Activated CD8-positive, alpha-beta T cell treated with anti-CD3 and anti-CD28 coated beads for 36 hours (primary cell): ENCODE measurements at regions of chr1 and their contacts with region 1.

Region 1: GRCh38 chr1:150925816-150926741 is at the start of gene SETDB1:
- DNase-seq: peak; percentile 98
- ATAC-seq: peak; percentile 91
- H3K4me3 Mint-ChIP-seq: peak within 1 kb of the TSS; percentile 92
- H3K27ac Mint-ChIP-seq: peak within 1 kb of the TSS; percentile 98
- H3K4me1 Mint-ChIP-seq: peaks cover 29% of the 10 kb centered on the region
- H3K27me3 Mint-ChIP-seq: no peaks in the 10 kb centered on the region
- CTCF ChIP-seq: no peak
- total RNA-seq, gene SETDB1: 45.1 to 52.3 TPM

Region 2: DNA sequence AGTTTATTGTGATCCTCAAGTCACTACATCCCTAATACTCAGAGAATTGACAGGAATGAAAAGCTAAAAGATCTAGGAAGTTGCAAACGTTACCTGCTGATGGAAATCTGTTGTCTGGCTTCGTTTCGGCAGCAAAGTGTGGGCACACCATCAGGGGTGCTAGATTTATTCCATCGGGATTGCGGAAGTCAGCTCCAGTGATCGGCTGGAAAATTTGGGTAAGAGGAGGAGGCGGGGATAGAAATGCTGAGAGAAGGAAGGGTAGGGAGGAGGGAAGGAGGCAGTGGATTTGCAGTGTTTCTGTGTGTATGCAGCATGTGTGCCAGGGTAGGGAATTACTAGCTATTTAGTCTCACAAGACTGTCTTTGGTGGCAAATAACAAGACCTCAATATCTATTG is 118.0 kb before region 1 on chr1 and contains the start of gene CTSK:
- CTCF ChIA-PET with region 1: interaction called, 13 read pairs
- POLR2A ChIA-PET with region 1: interaction called, 4 read pairs
- intact Hi-C with region 1: no loop called
- DNase-seq: no peak
- ATAC-seq: no peak
- H3K4me3 Mint-ChIP-seq: no peak within 1 kb of the TSS
- H3K27ac Mint-ChIP-seq: no peak within 1 kb of the TSS
- H3K4me1 Mint-ChIP-seq: peaks cover 14% of the 10 kb centered on the region
- H3K27me3 Mint-ChIP-seq: no peaks in the 10 kb centered on the region
- CTCF ChIP-seq: no peak
- total RNA-seq, gene CTSK: 2.9 to 3.6 TPM

Region 3: GRCh38 chr1:150841626-150842025 is 84.5 kb before region 1 on chr1:
- CTCF ChIA-PET with region 1: interaction called, 9 read pairs
- POLR2A ChIA-PET with region 1: interaction called, 4 read pairs
- intact Hi-C with region 1: loop called (anchors 5 kb)
- DNase-seq: peak; percentile 10
- ATAC-seq: peak; percentile 83
- H3K4me3 Mint-ChIP-seq: no peak overlapping the region
- H3K27ac Mint-ChIP-seq: peak overlapping the region; percentile 81
- H3K4me1 Mint-ChIP-seq: peaks cover 37% of the 10 kb centered on the region
- H3K27me3 Mint-ChIP-seq: no peaks in the 10 kb centered on the region
- CTCF ChIP-seq: no peak

Region 4: DNA sequence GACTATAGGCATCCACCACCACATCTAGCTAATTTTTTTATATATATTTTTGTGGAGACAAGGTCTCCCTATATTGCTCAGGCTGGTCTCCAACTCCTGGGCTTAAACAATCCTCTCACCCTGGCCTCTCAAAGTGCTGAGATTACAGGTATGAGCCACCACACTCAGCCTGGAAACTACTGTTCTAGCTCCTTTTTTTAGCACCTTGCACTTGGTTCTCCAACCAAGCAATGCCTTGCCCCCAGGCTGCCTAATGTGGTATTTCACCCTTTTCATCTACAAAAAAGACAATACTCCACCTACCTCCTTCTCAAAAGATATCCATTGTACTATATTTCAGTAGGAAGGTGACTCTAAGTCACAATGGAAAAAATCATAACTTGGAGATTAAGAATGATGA is 56.4 kb before region 1 on chr1:
- CTCF ChIA-PET with region 1: interaction called, 16 read pairs
- POLR2A ChIA-PET with region 1: no interaction called
- intact Hi-C with region 1: no loop called
- DNase-seq: peak; percentile 49
- ATAC-seq: peak; percentile 83
- H3K4me3 Mint-ChIP-seq: no peak overlapping the region
- H3K27ac Mint-ChIP-seq: peak overlapping the region; percentile 38
- H3K4me1 Mint-ChIP-seq: peaks cover 40% of the 10 kb centered on the region
- H3K27me3 Mint-ChIP-seq: no peaks in the 10 kb centered on the region
- CTCF ChIP-seq: no peak

Region 5: DNA sequence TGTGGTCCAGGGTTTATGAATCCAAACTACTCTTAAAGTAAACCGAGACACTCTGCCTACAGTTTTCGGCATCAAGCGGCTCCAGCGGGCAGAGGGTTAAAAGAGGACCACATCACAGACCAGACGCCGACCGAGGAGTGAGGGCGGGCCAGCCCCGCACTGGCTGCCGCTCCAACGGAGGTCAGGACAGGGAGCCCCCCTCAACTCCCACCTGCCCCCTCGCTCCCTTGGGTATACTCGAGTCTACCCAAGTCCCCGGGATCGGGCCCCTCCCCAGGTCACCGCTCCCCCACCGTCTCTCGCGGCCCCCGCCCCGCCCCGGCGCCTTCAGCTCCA is 50.0 kb before region 1 on chr1:
- CTCF ChIA-PET with region 1: interaction called, 11 read pairs
- POLR2A ChIA-PET with region 1: interaction called, 4 read pairs
- intact Hi-C with region 1: loop called (anchors 5 kb)
- DNase-seq: peak; percentile 72
- ATAC-seq: peak; percentile 40
- H3K4me3 Mint-ChIP-seq: peak overlapping the region; percentile 87
- H3K27ac Mint-ChIP-seq: peak overlapping the region; percentile 92
- H3K4me1 Mint-ChIP-seq: peaks cover 23% of the 10 kb centered on the region
- H3K27me3 Mint-ChIP-seq: no peaks in the 10 kb centered on the region
- CTCF ChIP-seq: peak; percentile 16

Region 6: GRCh38 chr1:150890033-150890416 is 36.1 kb before region 1 on chr1:
- CTCF ChIA-PET with region 1: interaction called, 10 read pairs
- POLR2A ChIA-PET with region 1: interaction called, 3 read pairs
- intact Hi-C with region 1: loop called (anchors 1 kb)
- DNase-seq: no peak
- ATAC-seq: peak; percentile 89
- H3K4me3 Mint-ChIP-seq: peak overlapping the region; percentile 41
- H3K27ac Mint-ChIP-seq: peak overlapping the region; percentile 80
- H3K4me1 Mint-ChIP-seq: peaks cover 31% of the 10 kb centered on the region
- H3K27me3 Mint-ChIP-seq: no peaks in the 10 kb centered on the region
- CTCF ChIP-seq: no peak

Region 7: DNA sequence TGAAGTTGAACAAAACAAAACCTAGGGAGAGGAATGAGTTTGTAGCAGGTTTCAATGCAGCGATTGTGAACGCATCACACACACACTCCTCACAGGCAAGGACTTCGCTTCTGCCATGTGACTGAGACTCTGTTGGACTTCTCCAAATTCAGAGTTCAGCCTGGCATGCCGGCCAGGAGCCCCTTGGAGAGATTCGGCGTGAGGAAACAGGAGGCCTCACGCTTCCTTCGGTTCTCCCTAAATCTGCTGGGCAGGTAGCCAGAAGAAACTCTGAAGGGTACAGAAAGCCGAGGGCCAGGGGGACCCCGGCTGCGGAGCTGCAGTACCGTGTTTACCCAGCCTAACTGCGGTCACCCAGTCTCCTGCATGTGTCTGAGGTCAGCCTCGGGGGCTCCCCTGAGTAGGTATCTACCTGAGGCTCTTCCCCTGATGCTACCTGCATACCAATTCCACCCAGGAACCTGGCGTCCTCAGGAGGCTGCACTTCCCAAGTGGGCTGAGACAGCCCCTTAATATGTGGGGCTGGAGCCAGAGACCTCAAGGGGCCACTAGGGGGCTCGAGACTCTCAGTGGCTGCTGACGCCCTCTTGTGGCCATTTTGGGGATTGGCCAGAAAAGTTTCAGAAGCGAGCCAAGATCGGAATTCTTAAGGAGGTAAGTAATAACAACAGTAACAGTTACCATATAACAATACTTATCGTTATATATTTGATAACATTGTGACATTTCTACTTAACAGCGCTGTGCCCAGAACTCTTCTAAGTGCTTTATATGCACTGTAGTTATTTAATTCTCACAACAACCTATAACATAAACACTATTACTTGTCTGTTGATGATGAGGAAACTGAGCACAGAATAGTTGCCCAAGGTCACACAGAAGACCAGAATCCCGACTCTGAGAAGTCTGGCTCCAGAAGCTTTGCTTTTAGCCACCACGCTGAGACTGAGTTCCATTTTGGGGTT is 53.3 kb after region 1 on chr1:
- CTCF ChIA-PET with region 1: interaction called, 6 read pairs
- POLR2A ChIA-PET with region 1: interaction called, 3 read pairs
- intact Hi-C with region 1: loop called (anchors 5 kb)
- DNase-seq: peak; percentile 96
- ATAC-seq: peak; percentile 60
- H3K4me3 Mint-ChIP-seq: peak overlapping the region; percentile 61
- H3K27ac Mint-ChIP-seq: peak overlapping the region; percentile 47
- H3K4me1 Mint-ChIP-seq: peaks cover 34% of the 10 kb centered on the region
- H3K27me3 Mint-ChIP-seq: no peaks in the 10 kb centered on the region
- CTCF ChIP-seq: peak; percentile 100

Region 8: DNA sequence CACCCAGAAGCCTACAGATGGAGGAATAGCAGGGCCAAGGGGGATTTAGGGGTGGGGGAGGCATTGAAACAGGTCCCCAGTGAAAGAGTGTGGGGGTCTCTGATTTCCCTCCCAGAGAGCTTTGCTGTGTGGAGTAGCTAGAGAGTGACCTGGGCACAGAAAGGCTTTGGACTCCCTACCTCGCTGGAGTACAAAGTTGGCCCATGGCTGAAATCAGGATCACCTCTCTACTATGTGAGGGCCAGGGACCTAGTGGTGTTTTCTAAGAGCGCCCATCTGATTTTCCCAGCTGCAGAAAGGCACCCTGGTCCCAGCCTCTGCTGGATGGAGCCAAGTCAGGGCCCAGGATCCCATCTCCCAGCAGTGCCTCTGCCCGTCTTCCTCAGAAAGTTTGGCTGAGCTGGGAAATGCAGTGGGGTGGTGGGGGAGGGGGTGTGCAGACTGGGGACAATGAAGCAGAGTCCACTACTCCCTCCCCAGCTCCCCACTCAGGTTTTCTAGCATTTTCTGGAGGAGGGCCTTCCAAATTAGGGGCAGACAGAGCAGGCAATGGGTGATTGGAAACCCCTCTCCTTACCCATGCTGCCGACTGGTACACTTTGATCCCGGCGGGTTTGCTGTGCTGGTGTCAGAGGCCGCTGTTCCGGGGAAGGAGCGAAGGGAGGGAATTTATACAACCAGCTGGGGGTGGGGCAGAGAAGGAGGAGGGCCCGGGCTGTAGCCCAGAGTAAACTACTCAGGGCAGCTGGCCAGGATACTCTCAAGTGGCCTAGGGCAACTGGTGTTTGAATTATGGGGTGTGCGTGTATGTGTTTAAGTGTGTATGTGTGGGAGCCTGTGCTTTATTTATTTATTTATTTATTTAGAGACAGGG is 446.2 kb after region 1 on chr1 and contains the start of gene SELENBP1:
- CTCF ChIA-PET with region 1: no interaction called
- POLR2A ChIA-PET with region 1: no interaction called
- intact Hi-C with region 1: no loop called
- DNase-seq: no peak
- ATAC-seq: no peak
- H3K4me3 Mint-ChIP-seq: no peak within 1 kb of the TSS
- H3K27ac Mint-ChIP-seq: no peak within 1 kb of the TSS
- H3K4me1 Mint-ChIP-seq: no peaks in the 10 kb centered on the region
- H3K27me3 Mint-ChIP-seq: no peaks in the 10 kb centered on the region
- CTCF ChIP-seq: no peak
- total RNA-seq, gene SELENBP1: not detected